A549 (cell line): ENCODE measurements at regions of chr20 and their contacts with region 1.

Region 1: GRCh38 chr20:54062812-54063280 is 7.5 kb downstream of the BCAS1 start:
- DNase-seq: peak; percentile 62 to 76
- ATAC-seq: peak; percentile 77 to 82
- H3K4me3 ChIP-seq: no peak overlapping the region
- H3K27ac ChIP-seq: peak overlapping the region in 1 of 2 experiments; percentile 27; a peak in 3 of 6 replicates
- H3K4me1 ChIP-seq: peaks cover 47% of the 10 kb centered on the region
- CTCF ChIP-seq: peak; percentile 88
- EP300 ChIP-seq: no peak
- POLR2A ChIP-seq: no peak
- RAD21 ChIP-seq: peak; percentile 85 to 90

Region 2: DNA sequence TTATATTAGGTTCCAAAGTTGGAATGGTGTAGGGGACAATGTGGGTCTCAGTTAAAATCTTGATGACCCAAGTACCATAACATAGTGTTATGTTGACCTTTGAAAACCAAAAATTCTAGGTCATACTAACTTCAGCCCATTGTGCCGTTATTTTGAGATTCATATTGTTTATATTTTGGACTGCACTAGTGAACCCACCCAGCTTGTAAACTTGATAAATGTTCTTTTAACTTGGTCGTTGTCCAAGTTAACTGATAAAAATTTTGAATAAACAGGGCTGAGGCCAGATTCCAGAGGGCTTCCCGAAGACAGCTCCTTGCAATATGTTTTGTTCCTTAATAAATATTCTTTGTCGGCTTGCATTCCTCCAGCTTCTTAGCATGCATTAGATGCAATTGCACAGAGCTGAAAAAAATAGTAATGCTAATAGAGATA is 82.8 kb before region 1 on chr20:
- CTCF ChIA-PET with region 1: no interaction called
- POLR2A ChIA-PET with region 1: no interaction called
- DNase-seq: no peak
- ATAC-seq: no peak
- H3K4me3 ChIP-seq: no peak overlapping the region
- H3K27ac ChIP-seq: no peak overlapping the region
- H3K4me1 ChIP-seq: no peaks in the 10 kb centered on the region
- CTCF ChIP-seq: no peak
- EP300 ChIP-seq: no peak
- POLR2A ChIP-seq: no peak
- RAD21 ChIP-seq: no peak

Region 3: DNA sequence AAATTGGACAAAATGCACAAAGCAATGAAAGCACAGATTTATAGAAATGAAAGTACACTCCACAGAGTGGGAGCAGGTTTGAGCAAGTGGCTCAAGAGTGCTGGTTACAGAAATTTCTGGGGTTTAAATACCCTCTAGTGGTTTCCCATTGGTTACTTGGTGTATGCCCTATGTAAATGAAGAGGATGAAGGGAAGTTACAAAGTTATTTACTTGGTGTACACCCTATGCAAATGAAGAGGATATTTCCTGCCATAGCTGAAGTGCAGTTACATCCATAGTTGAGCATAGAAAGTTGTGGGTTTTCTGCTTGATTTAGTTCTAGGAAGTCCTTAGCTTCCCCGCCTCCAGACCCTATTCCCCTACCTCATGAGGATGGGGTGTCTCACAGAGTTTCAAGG is 15.1 kb before region 1 on chr20:
- CTCF ChIA-PET with region 1: interaction called, 11 read pairs
- POLR2A ChIA-PET with region 1: no interaction called
- DNase-seq: no peak
- ATAC-seq: no peak
- H3K4me3 ChIP-seq: no peak overlapping the region
- H3K27ac ChIP-seq: no peak overlapping the region
- H3K4me1 ChIP-seq: peaks cover 7% of the 10 kb centered on the region; the same call in 1 of the 3 replicates
- CTCF ChIP-seq: no peak
- EP300 ChIP-seq: no peak
- POLR2A ChIP-seq: no peak
- RAD21 ChIP-seq: no peak

Region 4: DNA sequence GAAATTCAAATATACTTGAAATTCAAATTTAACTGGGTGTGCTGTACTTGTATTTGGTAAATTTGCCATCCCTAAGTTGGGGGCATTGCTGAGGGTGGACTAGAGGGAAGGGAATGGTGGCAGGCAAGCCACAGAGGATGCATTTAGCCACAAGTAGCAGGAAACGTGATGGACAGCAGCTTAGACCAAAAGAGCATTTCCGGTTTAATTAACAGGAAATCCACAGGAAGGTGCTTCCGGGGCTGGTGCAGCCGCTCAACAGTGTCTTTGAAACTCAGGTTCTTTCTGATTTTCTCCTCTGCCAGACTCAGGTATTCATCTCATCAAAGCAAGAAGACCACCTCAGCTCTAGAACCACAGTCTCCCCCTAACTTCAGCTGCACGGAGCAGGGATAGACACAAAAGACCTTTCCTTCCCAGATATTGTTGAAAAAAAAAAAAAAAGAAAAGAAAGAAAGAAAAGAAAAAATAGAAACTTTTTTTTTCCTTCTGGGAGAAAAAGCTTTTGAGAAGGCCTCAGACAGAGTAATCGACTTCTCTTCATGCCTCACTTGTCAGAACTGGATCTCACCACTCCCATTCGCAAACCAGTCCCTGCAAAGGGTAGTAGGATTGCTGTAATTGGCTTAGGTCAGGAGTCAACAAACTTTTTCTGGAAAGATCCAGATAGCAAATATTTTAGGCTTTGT is 15.6 kb after region 1 on chr20:
- CTCF ChIA-PET with region 1: interaction called, 10 read pairs
- POLR2A ChIA-PET with region 1: no interaction called
- DNase-seq: no peak
- ATAC-seq: no peak
- H3K4me3 ChIP-seq: no peak overlapping the region
- H3K27ac ChIP-seq: no peak overlapping the region
- H3K4me1 ChIP-seq: peaks cover 20% of the 10 kb centered on the region
- CTCF ChIP-seq: no peak
- EP300 ChIP-seq: no peak
- POLR2A ChIP-seq: no peak
- RAD21 ChIP-seq: no peak

Region 5: GRCh38 chr20:54431172-54431944 is 368.5 kb after region 1 on chr20:
- CTCF ChIA-PET with region 1: no interaction called
- POLR2A ChIA-PET with region 1: no interaction called
- DNase-seq: no peak
- ATAC-seq: no peak
- H3K4me3 ChIP-seq: no peak overlapping the region
- H3K27ac ChIP-seq: no peak overlapping the region
- H3K4me1 ChIP-seq: no peaks in the 10 kb centered on the region
- CTCF ChIP-seq: no peak
- EP300 ChIP-seq: no peak
- POLR2A ChIP-seq: no peak
- RAD21 ChIP-seq: no peak